ENCODE measurements at regions of chr17 and their contacts with region 1.

Region 1: GRCh38 chr17:76408052-76408849 is 23.8 kb downstream of the SPHK1 start:
- DNase-seq: peak; percentile 59 to 74 (median 67)
- H3K4me3 ChIP-seq: no peak overlapping the region
- H3K27ac ChIP-seq: no peak overlapping the region
- H3K4me1 ChIP-seq: peaks cover 25% of the 10 kb centered on the region
- H3K27me3 ChIP-seq: no peaks in the 10 kb centered on the region
- CTCF ChIP-seq: peak in 1 of 3 donors; percentile 45
- EP300 ChIP-seq: no peak
- POLR2A ChIP-seq: no peak

Region 2: DNA sequence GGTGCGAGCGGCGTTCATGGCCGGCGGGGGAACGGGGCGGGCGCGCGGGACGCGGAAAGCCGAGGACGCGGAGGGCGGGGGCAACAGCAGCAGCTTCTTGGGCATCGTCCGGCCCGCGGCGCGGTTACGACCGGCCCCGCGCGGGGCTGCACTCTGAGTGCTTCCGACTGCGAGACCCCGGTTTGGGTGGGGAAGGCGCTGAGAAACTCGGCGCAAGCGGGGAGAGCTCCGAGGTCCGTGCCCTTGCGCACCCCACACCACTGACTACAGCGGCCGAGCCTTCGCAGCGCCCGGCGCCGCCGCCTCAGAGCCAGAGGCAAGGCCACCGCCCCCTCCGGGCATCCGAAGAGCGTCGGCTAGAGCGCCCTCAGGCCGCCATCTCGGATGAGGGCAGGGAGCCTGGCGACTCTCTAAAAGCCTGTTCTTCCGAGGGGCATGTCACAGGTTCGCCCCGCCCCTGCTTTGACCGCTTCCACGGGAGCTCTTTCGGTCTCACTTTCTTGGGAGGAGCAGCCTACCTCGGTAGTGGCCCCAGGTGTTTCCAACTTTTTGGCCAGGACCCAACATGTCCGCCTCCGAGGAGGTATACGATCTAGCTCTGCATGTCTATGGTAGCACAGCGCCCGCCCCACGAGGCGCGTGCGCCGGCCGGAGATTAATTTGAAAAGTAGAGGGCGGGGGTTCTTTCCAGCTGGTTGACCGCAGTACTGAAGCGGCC is 54.5 kb before region 1 on chr17 and contains the start of gene PRPSAP1:
- intact Hi-C with region 1: no loop called
- DNase-seq: peak; percentile 81 to 90 (median 82)
- H3K4me3 ChIP-seq: peak within 1 kb of the TSS; percentile 83
- H3K27ac ChIP-seq: peak within 1 kb of the TSS; percentile 61 to 84
- H3K4me1 ChIP-seq: peaks cover 3% of the 10 kb centered on the region
- H3K27me3 ChIP-seq: no peaks in the 10 kb centered on the region
- CTCF ChIP-seq: peak; percentile 49 to 75 (median 60)
- EP300 ChIP-seq: no peak
- POLR2A ChIP-seq: peak; percentile 65
- total RNA-seq, gene PRPSAP1: 26.1 to 50.4 (median 44.5) TPM

Region 3: DNA sequence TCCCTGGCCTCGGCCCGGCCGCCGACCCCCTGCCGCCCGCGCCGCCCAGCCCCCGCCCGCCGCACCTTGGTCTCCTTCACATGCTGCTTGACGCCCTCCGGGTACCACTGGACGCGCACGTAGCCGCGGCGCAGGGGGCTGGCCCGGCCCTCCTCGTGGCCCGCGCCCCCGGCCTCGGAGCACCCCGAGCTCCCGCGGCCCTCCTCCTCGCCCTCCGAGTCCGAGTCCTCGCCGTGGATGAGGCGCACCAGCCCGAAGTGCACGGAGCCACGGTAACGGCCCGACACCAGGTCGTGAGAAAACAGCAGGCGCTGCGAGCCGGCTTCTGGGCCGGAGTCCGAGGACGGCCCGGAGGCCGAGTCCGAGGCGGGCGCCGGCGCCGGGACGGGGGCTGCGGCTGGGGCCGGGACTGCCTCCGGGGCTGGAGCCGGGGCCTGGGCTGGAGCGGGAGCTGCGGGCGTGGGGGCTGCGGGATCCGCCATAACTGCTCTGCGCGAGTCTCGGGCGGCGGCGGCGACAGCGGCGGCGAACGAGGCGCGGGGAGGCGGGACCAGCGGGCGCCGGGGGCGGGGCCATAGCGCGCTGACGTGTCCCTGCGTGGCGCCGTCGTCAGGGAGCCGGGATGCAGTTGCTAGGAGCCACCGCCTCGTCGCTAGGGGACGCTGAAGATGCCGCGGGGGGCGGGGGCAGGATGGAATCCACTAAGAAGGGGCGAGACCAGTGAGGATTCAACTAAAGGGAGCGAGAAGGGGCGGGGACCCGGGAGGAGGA is 44.6 kb after region 1 on chr17 and contains the start of gene UBE2O:
- intact Hi-C with region 1: loop called in 2 of 4 experiments (anchors 5 to 10 kb)
- DNase-seq: peak; percentile 75 to 93 (median 85)
- H3K4me3 ChIP-seq: peak within 1 kb of the TSS; percentile 65
- H3K27ac ChIP-seq: peak within 1 kb of the TSS; percentile 40 to 56
- H3K4me1 ChIP-seq: peaks cover 2% of the 10 kb centered on the region
- H3K27me3 ChIP-seq: no peaks in the 10 kb centered on the region
- CTCF ChIP-seq: peak in 2 of 3 donors; percentile 52 to 58
- EP300 ChIP-seq: no peak
- POLR2A ChIP-seq: peak; percentile 25
- total RNA-seq, gene UBE2O: 11.3 to 37.2 (median 29.0) TPM

Region 4: DNA sequence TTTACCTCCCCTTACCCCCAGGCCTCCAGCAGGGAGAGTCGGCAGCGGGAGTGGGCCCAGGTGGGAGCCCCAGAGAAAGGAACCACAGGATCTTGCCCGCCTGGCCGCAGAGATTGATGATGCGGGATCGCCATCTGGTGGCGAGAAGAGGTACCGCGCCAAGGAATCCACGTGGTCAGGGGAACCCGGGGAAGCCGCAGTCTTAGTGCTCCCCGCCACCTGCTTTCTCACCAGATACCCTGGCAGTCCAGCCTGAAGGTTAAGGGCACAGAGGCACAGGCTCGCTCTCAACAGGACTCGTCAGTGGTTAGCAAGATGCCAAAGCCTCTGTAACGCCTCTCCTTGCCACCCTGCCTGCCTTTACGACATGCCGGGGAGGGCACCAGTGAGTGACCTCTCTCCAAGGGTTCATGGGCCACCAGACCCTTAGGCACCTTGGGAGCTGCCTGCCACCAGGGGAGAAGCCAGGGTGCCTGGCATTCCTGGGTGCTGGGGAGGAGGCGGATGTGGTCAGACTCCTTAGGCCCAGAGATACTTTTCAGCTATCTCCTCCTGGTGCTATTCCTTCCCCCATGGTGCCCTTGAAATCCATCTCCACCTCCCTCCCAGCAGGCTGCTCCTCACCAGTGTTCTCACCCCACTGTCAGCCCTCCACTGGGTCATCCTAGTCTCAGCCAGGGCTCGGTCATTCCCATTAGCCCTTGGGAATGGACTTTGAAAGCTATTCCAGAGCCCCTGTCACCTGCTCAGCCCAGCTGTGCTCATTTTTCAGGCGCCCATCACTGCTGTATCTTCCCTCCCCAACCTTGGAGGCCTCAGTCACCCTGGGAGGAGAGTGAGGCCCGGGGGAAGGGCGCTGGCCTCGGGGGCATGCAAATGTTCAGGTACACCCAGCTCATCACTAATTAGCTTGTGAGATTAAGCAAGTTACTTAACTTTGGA is 98.4 kb after region 1 on chr17:
- intact Hi-C with region 1: loop called in 1 of 4 experiments (anchors 5 kb)
- DNase-seq: peak; percentile 74 to 92 (median 88)
- H3K4me3 ChIP-seq: no peak overlapping the region
- H3K27ac ChIP-seq: no peak overlapping the region
- H3K4me1 ChIP-seq: peaks cover 4% of the 10 kb centered on the region
- H3K27me3 ChIP-seq: no peaks in the 10 kb centered on the region
- CTCF ChIP-seq: peak; percentile 80 to 96 (median 96)
- EP300 ChIP-seq: no peak
- POLR2A ChIP-seq: peak; percentile 11

Region 5: GRCh38 chr17:76753061-76753961 is 345.1 kb after region 1 on chr17:
- intact Hi-C with region 1: no loop called
- DNase-seq: no peak
- H3K4me3 ChIP-seq: no peak overlapping the region
- H3K27ac ChIP-seq: no peak overlapping the region
- H3K4me1 ChIP-seq: no peaks in the 10 kb centered on the region
- H3K27me3 ChIP-seq: no peaks in the 10 kb centered on the region
- CTCF ChIP-seq: no peak
- EP300 ChIP-seq: no peak
- POLR2A ChIP-seq: no peak

Region 6: GRCh38 chr17:76797241-76797840 is 389.1 kb after region 1 on chr17:
- intact Hi-C with region 1: no loop called
- DNase-seq: no peak
- H3K4me3 ChIP-seq: no peak overlapping the region
- H3K27ac ChIP-seq: no peak overlapping the region
- H3K4me1 ChIP-seq: no peaks in the 10 kb centered on the region
- H3K27me3 ChIP-seq: no peaks in the 10 kb centered on the region
- CTCF ChIP-seq: no peak
- EP300 ChIP-seq: no peak
- POLR2A ChIP-seq: no peak